Right ventricle myocardium superior (tissue), 1 donor: ENCODE measurements at regions of chr7 and their contacts with region 1.

Region 1: DNA sequence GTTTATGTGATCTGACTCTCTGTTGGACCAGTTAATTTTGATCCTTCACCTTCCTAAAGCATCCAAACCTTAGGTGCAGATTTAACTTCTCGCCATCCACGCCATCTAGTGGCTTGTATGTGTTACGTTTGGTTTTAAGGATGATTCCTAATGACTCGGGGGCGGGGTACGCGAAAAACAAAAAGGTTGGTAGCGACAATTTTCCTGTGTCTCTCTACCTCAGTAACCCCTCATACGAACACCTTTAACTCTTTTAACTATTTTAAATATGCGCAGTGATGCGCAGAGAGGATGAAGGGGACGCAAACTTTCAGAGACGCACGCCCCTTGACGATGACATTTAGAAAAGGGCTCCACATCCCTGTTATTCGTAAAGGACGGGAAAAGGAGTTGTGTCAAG is 714 bp upstream of the KCND2 start:
- DNase-seq: no peak
- ATAC-seq: peak; percentile 69

Region 2: DNA sequence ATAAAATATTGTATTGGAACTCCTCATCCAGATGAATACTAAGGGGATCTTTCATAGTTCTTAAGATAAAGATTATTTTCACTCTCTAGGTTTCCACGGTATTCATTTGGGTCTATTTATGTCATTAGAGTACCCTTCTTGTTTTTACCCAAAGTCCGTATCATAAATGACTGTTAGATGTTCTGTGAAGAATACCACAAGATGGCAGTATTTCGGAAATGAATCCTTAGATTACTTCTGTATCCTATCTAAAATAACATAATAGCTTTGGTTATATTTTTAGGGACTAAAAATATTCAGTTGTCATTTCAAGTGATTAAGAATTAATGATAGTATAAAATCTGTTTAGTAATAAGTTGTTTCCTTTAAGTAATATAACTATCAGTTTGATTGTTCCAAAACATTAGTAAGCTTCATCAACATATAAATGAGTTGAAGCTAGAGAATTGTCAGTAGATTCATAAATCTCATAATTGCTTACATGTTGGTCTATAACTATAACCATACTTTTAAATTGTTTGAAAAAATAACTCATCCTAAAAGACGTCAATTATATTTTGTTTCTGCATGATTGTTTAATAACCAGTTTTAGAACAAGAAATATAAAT is 336.7 kb before region 1 on chr7:
- intact Hi-C with region 1: loop called (anchors 5 kb)
- DNase-seq: no peak
- ATAC-seq: no peak

Region 3: GRCh38 chr7:120052884-120053382 is 219.3 kb before region 1 on chr7:
- intact Hi-C with region 1: no loop called
- DNase-seq: peak; percentile 61
- ATAC-seq: peak; percentile 95

Region 4: GRCh38 chr7:120303105-120303504 is 30.8 kb after region 1 on chr7:
- intact Hi-C with region 1: no loop called
- DNase-seq: no peak
- ATAC-seq: no peak